Activated B cell treated with CpG ODN at 0.5 μM for 24 hours (primary cell): ENCODE measurements at regions of chr3 and their contacts with region 1.

Region 1: GRCh38 chr3:2211568-2211967 is 112.9 kb downstream of the CNTN4 start:
- DNase-seq: no peak
- ATAC-seq: no peak
- H3K4me3 Mint-ChIP-seq: no peak overlapping the region
- H3K27ac Mint-ChIP-seq: no peak overlapping the region
- H3K4me1 Mint-ChIP-seq: no peaks in the 10 kb centered on the region
- H3K27me3 Mint-ChIP-seq: no peaks in the 10 kb centered on the region
- CTCF ChIP-seq: no peak

Region 2: GRCh38 chr3:707041-707440 is 1504.5 kb before region 1 on chr3:
- CTCF ChIA-PET with region 1: no interaction called
- POLR2A ChIA-PET with region 1: no interaction called
- intact Hi-C with region 1: loop called (anchors 5 kb)
- DNase-seq: no peak
- ATAC-seq: no peak
- H3K4me3 Mint-ChIP-seq: no peak overlapping the region
- H3K27ac Mint-ChIP-seq: no peak overlapping the region
- H3K4me1 Mint-ChIP-seq: no peaks in the 10 kb centered on the region
- H3K27me3 Mint-ChIP-seq: no peaks in the 10 kb centered on the region
- CTCF ChIP-seq: no peak

Region 3: GRCh38 chr3:2372306-2372705 is 160.7 kb after region 1 on chr3:
- CTCF ChIA-PET with region 1: no interaction called
- POLR2A ChIA-PET with region 1: no interaction called
- intact Hi-C with region 1: no loop called
- DNase-seq: no peak
- ATAC-seq: no peak
- H3K4me3 Mint-ChIP-seq: no peak overlapping the region
- H3K27ac Mint-ChIP-seq: no peak overlapping the region
- H3K4me1 Mint-ChIP-seq: no peaks in the 10 kb centered on the region
- H3K27me3 Mint-ChIP-seq: no peaks in the 10 kb centered on the region
- CTCF ChIP-seq: no peak